H1 (cell line): ENCODE measurements at regions of chr19 and their contacts with region 1.

Region 1: GRCh38 chr19:3479177-3479833 is 1.0 kb downstream of the SMIM24 start:
- DNase-seq: peak in 1 of 2 experiments; percentile 69
- H3K4me3 ChIP-seq: peak overlapping the region in 2 of 4 experiments; percentile 12 to 48; a peak in 3 of 8 replicates
- H3K27ac ChIP-seq: no peak overlapping the region
- H3K4me1 ChIP-seq: peaks cover 0 to 7% (median 5%) of the 10 kb centered on the region in 4 experiments; a peak in 6 of 7 replicates
- H3K27me3 ChIP-seq: peaks cover 0 to 7% (median 2%) of the 10 kb centered on the region in 4 experiments; a peak in 3 of 7 replicates
- CTCF ChIP-seq: no peak
- EP300 ChIP-seq: no peak
- POLR2A ChIP-seq: no peak
- RAD21 ChIP-seq: no peak

Region 2: GRCh38 chr19:3336680-3337523 is 142.4 kb before region 1 on chr19:
- CTCF ChIA-PET with region 1: interaction called, 12 read pairs
- POLR2A ChIA-PET with region 1: no interaction called
- DNase-seq: no peak
- H3K4me3 ChIP-seq: no peak overlapping the region
- H3K27ac ChIP-seq: no peak overlapping the region
- H3K4me1 ChIP-seq: no peaks in the 10 kb centered on the region
- H3K27me3 ChIP-seq: peaks cover 0 to 6% (median 1%) of the 10 kb centered on the region in 4 experiments; a peak in 1 of 7 replicates
- CTCF ChIP-seq: no peak
- EP300 ChIP-seq: no peak
- POLR2A ChIP-seq: no peak
- RAD21 ChIP-seq: no peak

Region 3: GRCh38 chr19:3494051-3494450 is 14.7 kb after region 1 on chr19:
- CTCF ChIA-PET with region 1: interaction called, 30 read pairs
- POLR2A ChIA-PET with region 1: interaction called, 10 read pairs
- DNase-seq: peak in 1 of 2 experiments; percentile 88
- H3K4me3 ChIP-seq: no peak overlapping the region
- H3K27ac ChIP-seq: no peak overlapping the region; the same call in 1 of the 2 replicates
- H3K4me1 ChIP-seq: no peaks in the 10 kb centered on the region
- H3K27me3 ChIP-seq: no peaks in the 10 kb centered on the region
- CTCF ChIP-seq: no peak
- EP300 ChIP-seq: no peak
- POLR2A ChIP-seq: no peak
- RAD21 ChIP-seq: no peak

Region 4: GRCh38 chr19:3500429-3501130 is 21.3 kb after region 1 on chr19 and contains the start of gene DOHH:
- CTCF ChIA-PET with region 1: interaction called, 30 read pairs
- POLR2A ChIA-PET with region 1: interaction called, 18 read pairs
- DNase-seq: peak; percentile 91 to 96
- H3K4me3 ChIP-seq: peak within 1 kb of the TSS; percentile 77 to 98 (median 92)
- H3K27ac ChIP-seq: peak within 1 kb of the TSS; percentile 100
- H3K4me1 ChIP-seq: no peaks in the 10 kb centered on the region; a peak in 3 of 7 replicates
- H3K27me3 ChIP-seq: no peaks in the 10 kb centered on the region
- CTCF ChIP-seq: no peak
- EP300 ChIP-seq: peak in 1 of 2 experiments; percentile 99; a peak in 2 of 3 replicates
- POLR2A ChIP-seq: peak in 1 of 2 experiments; percentile 92; a peak in 2 of 3 replicates
- RAD21 ChIP-seq: no peak
- total RNA-seq, gene DOHH: 17.7 and 19.1 TPM in 2 replicates

Region 5: GRCh38 chr19:3516675-3517207 is 37.4 kb after region 1 on chr19:
- CTCF ChIA-PET with region 1: no interaction called
- POLR2A ChIA-PET with region 1: no interaction called
- DNase-seq: no peak
- H3K4me3 ChIP-seq: no peak overlapping the region
- H3K27ac ChIP-seq: no peak overlapping the region
- H3K4me1 ChIP-seq: peaks cover 0 to 29% (median 20%) of the 10 kb centered on the region in 4 experiments; a peak in 6 of 7 replicates
- H3K27me3 ChIP-seq: no peaks in the 10 kb centered on the region
- CTCF ChIP-seq: no peak
- EP300 ChIP-seq: no peak
- POLR2A ChIP-seq: no peak
- RAD21 ChIP-seq: no peak